ENCODE measurements at regions of chr10 and their contacts with region 1.

Region 1: GRCh38 chr10:71293446-71294084 is 25.5 kb upstream of the SLC29A3 start:
- DNase-seq: no peak
- H3K4me3 ChIP-seq: no peak overlapping the region
- CTCF ChIP-seq: no peak

Region 2: DNA sequence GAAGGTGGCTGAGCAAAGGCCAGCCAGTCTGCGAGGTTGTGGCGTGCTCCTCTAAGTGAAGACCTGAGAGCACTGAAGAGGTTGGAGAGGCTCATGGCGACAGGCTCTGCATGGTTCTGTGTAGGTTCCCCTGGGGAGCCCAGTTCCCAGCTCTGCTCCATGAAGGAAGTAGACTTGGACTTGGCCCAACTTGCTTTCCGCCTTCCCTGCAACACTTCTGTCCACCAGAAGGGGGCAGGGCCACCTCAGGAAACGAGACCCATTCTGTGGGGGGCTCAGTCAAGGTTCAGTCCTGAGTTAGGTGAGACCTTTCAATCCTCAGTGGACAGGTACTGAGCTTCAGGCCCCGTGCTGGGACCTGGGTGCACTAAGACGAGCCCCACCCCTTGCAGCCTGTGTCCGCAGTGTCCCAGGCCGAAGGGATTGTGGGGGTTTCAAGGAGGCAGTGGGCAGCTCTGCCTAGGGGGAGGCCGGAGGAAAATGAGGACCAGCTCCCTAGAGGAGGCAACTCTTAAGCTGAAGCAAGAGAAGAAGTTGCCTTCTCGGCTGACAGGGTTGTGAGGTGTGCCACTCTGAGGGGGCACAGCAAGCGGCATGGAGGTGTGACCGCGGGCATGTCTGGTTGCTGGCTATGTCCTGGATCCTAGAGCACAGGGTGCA is 390.2 kb before region 1 on chr10:
- in situ Hi-C with region 1: loop called (anchors 5 kb)
- DNase-seq: peak; percentile 20
- H3K4me3 ChIP-seq: no peak overlapping the region
- CTCF ChIP-seq: peak; percentile 93

Region 3: GRCh38 chr10:71179382-71179781 is 114.2 kb before region 1 on chr10:
- in situ Hi-C with region 1: no loop called
- DNase-seq: no peak
- H3K4me3 ChIP-seq: no peak overlapping the region
- CTCF ChIP-seq: no peak

Region 4: GRCh38 chr10:71212318-71213126 is 81.0 kb before region 1 on chr10 and contains the start of gene UNC5B:
- in situ Hi-C with region 1: no loop called
- DNase-seq: peak; percentile 53
- H3K4me3 ChIP-seq: peak within 1 kb of the TSS; percentile 68
- CTCF ChIP-seq: no peak

Region 5: DNA sequence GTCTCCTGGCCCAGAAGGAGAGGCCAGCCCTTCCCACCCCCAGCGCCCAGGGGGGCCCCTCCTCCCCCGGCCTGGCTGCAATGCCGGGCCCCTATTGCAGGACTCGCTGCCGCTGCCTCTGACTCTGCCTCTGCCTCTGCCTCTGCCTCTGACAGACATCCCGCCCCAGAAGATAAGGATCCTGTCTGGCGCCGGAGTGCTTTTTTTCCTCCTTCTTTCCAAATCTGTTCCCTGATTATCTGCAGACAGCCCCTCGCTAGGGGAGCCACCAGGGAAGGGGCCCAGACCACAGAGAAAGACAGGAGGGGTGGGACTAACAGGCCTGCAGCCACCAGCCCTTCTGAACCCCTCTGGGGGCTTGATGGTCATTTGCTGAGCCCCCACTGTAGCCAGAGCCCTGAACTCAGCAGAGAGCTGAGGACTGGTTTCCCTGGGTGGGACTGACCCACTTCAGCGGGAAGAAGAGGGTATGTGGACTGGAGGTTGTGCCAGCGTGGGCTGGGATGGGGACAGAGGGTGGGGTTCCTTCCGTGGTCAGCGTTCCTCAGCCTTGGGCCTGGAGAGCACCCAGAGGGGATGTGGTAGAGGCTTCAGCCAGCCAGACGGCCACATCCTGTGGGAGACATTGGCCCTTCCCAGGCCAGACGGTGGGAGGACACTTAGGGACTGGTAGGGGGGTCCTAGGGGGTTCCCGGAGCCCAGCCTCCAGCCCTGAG is 58.4 kb before region 1 on chr10:
- in situ Hi-C with region 1: no loop called
- DNase-seq: peak; percentile 52
- H3K4me3 ChIP-seq: no peak overlapping the region
- CTCF ChIP-seq: no peak

Measured in astrocyte of the cerebellum (primary cell).